ENCODE measurements at regions of chr5 and their contacts with region 1.

Region 1: DNA sequence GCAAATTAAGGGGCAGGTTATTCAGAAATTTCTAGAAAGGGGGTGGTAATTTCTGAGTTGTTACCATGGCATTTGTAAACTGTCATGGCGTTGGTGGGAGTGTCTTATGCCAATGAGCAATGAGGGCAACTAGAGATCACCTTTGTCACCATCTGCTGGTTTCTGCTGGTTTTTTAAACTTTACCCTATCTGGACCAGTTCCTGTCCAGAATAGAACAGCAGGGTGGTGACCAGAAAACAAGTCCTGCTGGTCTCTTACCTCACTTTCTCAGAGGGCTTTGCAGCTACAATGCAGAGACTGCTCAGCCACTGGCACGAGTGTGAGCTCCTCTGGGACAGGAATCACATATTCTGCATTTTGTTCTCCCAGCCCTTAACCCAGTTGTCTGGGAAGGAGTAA is 51.4 kb downstream of the FAM114A2 start:
- DNase-seq: no peak
- ATAC-seq: no peak
- H3K4me3 ChIP-seq: no peak overlapping the region
- H3K27ac ChIP-seq: no peak overlapping the region
- H3K4me1 ChIP-seq: no peaks in the 10 kb centered on the region
- H3K27me3 ChIP-seq: no peaks in the 10 kb centered on the region
- CTCF ChIP-seq: no peak

Region 2: GRCh38 chr5:154242964-154243376 is 255.7 kb after region 1 on chr5:
- CTCF ChIA-PET with region 1: interaction called, 11 read pairs
- POLR2A ChIA-PET with region 1: no interaction called
- in situ Hi-C with region 1: no loop called
- intact Hi-C with region 1: no loop called
- DNase-seq: no peak
- ATAC-seq: no peak
- H3K4me3 ChIP-seq: no peak overlapping the region
- H3K27ac ChIP-seq: no peak overlapping the region
- H3K4me1 ChIP-seq: no peaks in the 10 kb centered on the region
- H3K27me3 ChIP-seq: no peaks in the 10 kb centered on the region
- CTCF ChIP-seq: no peak